ENCODE measurements at regions of chr11 and their contacts with region 1.

Region 1: GRCh38 chr11:122215244-122215992 is 99.4 kb upstream of the BLID start:
- DNase-seq: peak; percentile 55 to 89 (median 74)
- ATAC-seq: peak; percentile 92 to 99 (median 97)
- H3K4me3 ChIP-seq: no peak overlapping the region
- H3K27ac ChIP-seq: no peak overlapping the region
- H3K4me1 ChIP-seq: peaks cover 0 to 1% (median 0%) of the 10 kb centered on the region in 3 donors
- H3K27me3 ChIP-seq: no peaks in the 10 kb centered on the region
- CTCF ChIP-seq: peak; percentile 85 to 95 (median 89)

Region 2: GRCh38 chr11:121964591-121964990 is 250.8 kb before region 1 on chr11:
- intact Hi-C with region 1: no loop called
- DNase-seq: no peak
- ATAC-seq: no peak
- H3K4me3 ChIP-seq: no peak overlapping the region
- H3K27ac ChIP-seq: no peak overlapping the region
- H3K4me1 ChIP-seq: no peaks in the 10 kb centered on the region
- H3K27me3 ChIP-seq: no peaks in the 10 kb centered on the region
- CTCF ChIP-seq: no peak

Region 3: GRCh38 chr11:122491509-122491908 is 276.1 kb after region 1 on chr11:
- intact Hi-C with region 1: loop called in 1 of 3 experiments (anchors 5 kb)
- DNase-seq: no peak
- ATAC-seq: no peak
- H3K4me3 ChIP-seq: no peak overlapping the region
- H3K27ac ChIP-seq: no peak overlapping the region
- H3K4me1 ChIP-seq: no peaks in the 10 kb centered on the region
- H3K27me3 ChIP-seq: no peaks in the 10 kb centered on the region
- CTCF ChIP-seq: no peak

Region 4: DNA sequence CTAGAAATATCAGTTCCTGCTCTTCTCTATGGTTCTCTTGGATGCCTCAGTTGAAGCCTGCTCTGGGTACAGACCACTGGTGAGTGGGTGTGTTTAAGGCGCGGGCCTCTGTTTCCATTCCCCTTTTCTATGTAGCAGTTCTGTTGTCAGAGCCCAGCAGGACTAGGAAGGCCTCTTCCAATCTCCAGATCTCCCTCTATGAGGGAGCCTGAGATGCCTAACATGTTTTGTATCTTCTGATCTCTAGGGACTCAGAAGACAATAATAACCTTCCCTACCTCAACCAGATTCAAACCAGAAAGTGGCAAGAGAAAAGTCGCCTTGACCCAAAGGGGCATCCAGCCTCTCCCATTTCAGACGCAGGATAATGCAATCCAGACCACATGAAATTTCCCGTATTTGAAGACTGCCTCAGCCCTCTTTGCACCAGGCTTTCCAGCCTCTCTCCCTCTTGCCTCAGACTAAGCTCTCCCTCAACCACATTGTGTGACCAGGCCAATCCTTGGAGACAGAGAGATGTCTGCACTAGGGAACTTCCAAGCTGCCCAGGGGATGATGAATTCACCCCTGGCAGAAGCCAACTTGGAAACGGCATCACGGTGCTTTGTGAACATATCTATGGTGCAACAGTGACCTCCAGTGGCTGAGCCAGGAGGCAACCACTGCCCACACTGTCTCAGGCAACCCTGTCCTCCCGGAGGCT is 290.0 kb after region 1 on chr11:
- intact Hi-C with region 1: loop called (anchors 5 to 10 kb)
- DNase-seq: peak; percentile 64 to 87 (median 78)
- ATAC-seq: peak; percentile 95 to 100 (median 100)
- H3K4me3 ChIP-seq: no peak overlapping the region
- H3K27ac ChIP-seq: no peak overlapping the region
- H3K4me1 ChIP-seq: no peaks in the 10 kb centered on the region
- H3K27me3 ChIP-seq: no peaks in the 10 kb centered on the region
- CTCF ChIP-seq: peak; percentile 56 to 81 (median 74)

Region 5: DNA sequence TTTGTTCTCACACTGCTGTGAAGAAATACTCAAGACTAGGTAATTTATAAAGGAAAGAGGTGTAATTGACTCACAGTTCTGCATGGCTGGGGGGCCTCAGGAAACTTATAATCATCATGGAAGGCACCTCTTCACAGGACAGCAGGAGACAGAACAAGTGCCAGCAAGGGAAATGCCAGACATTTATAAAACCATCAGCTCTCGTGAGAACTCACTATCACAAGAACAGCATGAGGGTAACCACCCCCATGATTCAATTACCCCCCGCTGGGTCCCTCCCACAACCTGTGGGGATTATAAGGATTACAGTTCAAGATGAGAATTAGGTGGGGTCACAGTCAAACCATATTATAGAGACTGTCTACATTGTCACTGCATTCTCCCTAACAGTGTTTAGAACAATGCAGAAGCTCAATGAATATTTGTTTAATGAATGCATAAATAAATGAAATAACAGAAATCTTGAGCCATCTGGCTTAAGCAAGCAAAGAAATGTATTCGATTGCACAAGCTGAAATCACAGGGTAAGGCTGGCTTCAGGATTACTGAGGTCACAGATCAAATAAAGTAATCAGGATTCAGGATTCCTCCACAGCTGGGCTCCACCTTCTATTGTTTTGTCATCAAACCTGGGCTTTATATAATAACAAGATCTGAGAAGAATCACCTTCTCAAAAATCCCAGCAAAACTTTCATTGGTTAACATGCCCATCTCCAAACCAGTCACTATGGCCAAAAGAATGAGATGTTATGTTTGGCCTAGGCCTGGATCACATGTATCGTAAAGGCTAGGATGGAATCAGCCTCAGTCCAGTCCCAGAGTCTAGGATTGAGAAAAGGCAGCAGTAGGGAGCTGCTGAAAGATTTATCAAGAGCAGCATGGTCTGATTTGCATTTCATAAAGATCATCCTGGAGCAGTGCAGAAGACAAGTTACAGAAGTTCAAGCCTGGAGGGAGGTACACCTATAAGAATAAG is 302.3 kb after region 1 on chr11:
- intact Hi-C with region 1: loop called in 1 of 3 experiments (anchors 10 kb)
- DNase-seq: no peak
- ATAC-seq: no peak
- H3K4me3 ChIP-seq: no peak overlapping the region
- H3K27ac ChIP-seq: no peak overlapping the region
- H3K4me1 ChIP-seq: no peaks in the 10 kb centered on the region
- H3K27me3 ChIP-seq: no peaks in the 10 kb centered on the region
- CTCF ChIP-seq: no peak

Region 6: GRCh38 chr11:122563761-122564160 is 348.3 kb after region 1 on chr11:
- intact Hi-C with region 1: no loop called
- DNase-seq: no peak
- ATAC-seq: no peak
- H3K4me3 ChIP-seq: no peak overlapping the region
- H3K27ac ChIP-seq: no peak overlapping the region
- H3K4me1 ChIP-seq: no peaks in the 10 kb centered on the region
- H3K27me3 ChIP-seq: no peaks in the 10 kb centered on the region
- CTCF ChIP-seq: no peak

Region 7: GRCh38 chr11:122578168-122578825 is 362.9 kb after region 1 on chr11:
- intact Hi-C with region 1: no loop called
- DNase-seq: no peak
- ATAC-seq: no peak
- H3K4me3 ChIP-seq: no peak overlapping the region
- H3K27ac ChIP-seq: no peak overlapping the region
- H3K4me1 ChIP-seq: no peaks in the 10 kb centered on the region
- H3K27me3 ChIP-seq: no peaks in the 10 kb centered on the region
- CTCF ChIP-seq: no peak

Region 8: GRCh38 chr11:123174196-123175183 is 959.1 kb after region 1 on chr11:
- intact Hi-C with region 1: no loop called
- DNase-seq: peak in 1 of 6 donors; percentile 17
- ATAC-seq: peak; percentile 48 to 79 (median 60)
- H3K4me3 ChIP-seq: no peak overlapping the region
- H3K27ac ChIP-seq: no peak overlapping the region
- H3K4me1 ChIP-seq: no peaks in the 10 kb centered on the region
- H3K27me3 ChIP-seq: no peaks in the 10 kb centered on the region
- CTCF ChIP-seq: no peak

Measured in pancreas (tissue), 10 donors.